Right ventricle myocardium inferior (tissue), 1 donor: ENCODE measurements at regions of chr12 and their contacts with region 1.

Region 1: GRCh38 chr12:102484428-102484958 is 4.1 kb upstream of the IGF1 start:
- DNase-seq: no peak
- ATAC-seq: peak; percentile 51

Region 2: GRCh38 chr12:102167821-102168604 is 316.5 kb before region 1 on chr12:
- intact Hi-C with region 1: loop called (anchors 2 kb)
- DNase-seq: no peak
- ATAC-seq: no peak

Region 3: GRCh38 chr12:102426599-102427542 is 57.6 kb before region 1 on chr12:
- intact Hi-C with region 1: no loop called
- DNase-seq: no peak
- ATAC-seq: no peak